ENCODE measurements at regions of chr5 and their contacts with region 1.

Region 1: DNA sequence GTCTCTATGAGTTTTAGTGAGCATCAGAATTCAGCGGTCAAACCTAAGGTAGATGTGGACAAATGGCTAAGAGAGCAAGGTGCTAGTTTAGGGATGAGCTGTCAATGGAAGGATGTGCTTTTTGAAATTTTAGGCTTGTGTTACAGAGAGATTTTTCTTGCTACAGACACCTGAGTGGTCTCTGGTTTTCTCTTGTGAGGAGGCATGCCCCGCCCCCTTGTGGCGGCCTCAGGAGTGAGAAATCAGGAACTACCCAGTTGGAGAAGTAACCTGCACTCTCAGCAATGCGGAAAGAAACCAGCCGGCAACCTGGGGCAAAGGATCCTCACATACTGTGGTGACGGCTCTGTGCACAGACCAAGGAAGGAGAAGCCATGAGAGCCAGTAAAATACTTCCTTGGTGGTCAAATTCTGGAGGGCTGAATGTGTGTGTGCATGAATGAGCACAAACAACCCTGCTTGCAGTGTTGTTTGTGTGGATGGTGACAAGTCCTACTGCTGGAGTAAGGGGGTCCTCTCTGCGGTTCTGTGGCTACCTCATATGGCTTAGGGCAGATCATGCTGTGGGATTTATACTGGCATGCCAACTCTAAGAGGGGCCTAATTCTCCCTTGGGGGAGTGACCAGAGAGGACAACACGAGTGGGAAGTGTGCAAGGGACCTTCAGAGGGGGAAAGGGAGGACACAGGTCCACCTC is 16.7 kb upstream of the HSD17B4 start:
- DNase-seq: no peak
- H3K4me3 ChIP-seq: no peak overlapping the region
- CTCF ChIP-seq: peak; percentile 73

Region 2: DNA sequence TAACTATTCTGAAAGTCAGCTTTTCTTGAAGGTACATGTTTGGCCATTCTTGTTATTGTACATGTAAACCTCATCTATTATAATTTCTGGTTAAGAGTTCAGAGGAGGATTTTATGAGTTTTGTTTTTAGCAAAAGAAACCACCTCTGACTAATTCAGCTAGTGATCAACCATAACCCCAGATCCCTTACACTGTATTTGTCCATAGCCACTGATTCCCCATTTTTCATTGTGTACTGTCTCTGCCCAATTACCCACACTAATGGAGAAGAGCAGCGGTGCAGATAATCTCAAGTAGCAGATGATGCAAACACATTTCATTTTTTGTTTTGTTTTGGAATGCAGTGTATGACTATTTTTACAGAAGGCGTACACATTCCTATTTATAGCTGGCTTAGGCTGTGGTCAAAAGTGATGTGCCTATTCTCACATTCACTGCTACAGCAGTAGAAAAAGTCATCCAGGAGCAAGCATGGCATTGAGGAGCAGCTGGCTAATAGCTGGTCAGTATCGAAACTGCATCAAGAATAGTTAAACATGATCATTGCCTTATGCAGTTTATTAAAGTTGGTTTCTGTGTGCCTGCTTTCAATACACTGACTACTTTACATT is 1435.5 kb before region 1 on chr5:
- CTCF ChIA-PET with region 1: no interaction called
- POLR2A ChIA-PET with region 1: no interaction called
- DNase-seq: no peak
- H3K4me3 ChIP-seq: no peak overlapping the region
- CTCF ChIP-seq: no peak

Region 3: DNA sequence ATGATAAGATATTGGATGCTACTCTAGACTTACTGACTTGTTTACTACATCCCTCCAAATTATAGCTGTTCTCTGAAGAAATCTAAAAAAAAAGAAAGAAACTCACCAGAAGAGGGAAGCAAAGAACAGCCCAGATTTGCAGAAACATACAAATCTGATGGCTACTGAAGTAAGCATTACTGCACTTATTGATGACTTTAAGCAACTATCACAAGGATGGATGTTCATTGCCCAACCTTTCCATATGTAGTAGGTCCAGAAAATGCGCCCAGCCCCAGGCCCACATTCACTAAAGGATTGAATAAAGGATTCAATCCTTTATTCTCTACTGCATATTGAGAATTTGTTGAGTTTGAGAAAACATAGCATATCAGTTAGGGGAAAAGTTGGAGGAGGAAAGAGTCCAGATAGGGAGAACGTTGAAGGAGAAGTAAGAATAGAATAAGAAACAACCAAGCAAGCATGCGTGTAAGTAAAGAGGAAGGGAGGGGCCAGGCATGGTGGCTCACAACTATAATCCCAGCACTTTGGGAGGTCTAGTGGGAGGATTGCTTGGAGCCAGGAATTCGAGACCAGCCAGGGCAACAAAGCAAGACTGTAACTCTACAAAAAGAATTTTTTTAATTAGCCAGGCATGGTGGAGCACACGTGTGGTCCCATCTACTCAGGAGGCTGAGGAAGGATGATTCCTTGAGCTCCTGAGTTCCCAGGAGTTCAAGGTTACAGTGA is 413.4 kb before region 1 on chr5:
- CTCF ChIA-PET with region 1: interaction called, 23 read pairs
- POLR2A ChIA-PET with region 1: no interaction called
- DNase-seq: peak; percentile 3
- H3K4me3 ChIP-seq: no peak overlapping the region
- CTCF ChIP-seq: peak; percentile 37

Region 4: GRCh38 chr5:119418531-119419116 is 17.0 kb before region 1 on chr5:
- CTCF ChIA-PET with region 1: interaction called, 23 read pairs
- POLR2A ChIA-PET with region 1: no interaction called
- DNase-seq: no peak
- H3K4me3 ChIP-seq: no peak overlapping the region
- CTCF ChIP-seq: no peak